ENCODE measurements at regions of chr11 and their contacts with region 1.

Region 1: DNA sequence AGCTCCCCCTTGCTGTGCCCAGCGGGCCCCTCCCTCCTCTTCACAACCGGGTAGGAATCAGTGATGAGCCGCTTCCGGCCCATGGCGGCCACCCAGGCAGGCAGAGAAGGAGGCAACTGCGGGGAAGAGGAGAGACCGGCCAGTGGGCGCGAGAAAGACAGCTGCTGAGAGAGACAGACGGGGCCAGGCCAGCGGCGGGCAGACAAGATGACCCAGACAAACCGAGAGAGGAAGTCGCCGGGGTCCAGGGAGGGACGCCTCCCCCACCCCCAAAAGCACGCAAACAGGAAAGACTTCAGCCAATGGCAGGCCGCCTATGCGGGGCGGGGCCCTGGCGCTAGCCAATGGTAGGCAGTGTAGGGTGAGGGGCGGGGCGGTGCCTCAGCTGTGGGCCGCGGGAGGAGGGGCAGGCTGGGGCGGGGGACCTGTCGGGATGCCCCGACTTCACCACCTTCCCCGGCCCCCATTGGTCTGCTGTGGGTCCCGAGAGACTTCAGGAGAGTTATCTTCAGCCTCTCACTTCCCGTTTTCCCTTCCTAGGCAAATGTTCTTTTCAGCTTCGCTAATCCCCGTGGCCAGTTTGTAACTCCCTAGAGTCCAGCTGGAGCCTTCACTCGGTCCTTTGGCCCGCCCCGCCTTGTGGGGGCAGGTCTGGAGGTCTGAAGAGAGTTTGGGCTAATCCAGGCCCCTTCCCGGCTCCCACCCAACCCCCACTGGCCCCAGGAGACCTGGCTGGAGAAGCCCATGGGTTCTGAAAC is at the start of gene POLD4:
- DNase-seq: peak; percentile 92
- ATAC-seq: peak; percentile 83
- H3K4me3 ChIP-seq: peak within 1 kb of the TSS; percentile 53
- H3K27ac ChIP-seq: peak within 1 kb of the TSS; percentile 91
- H3K4me1 ChIP-seq: peaks cover 42% of the 10 kb centered on the region
- H3K27me3 ChIP-seq: no peaks in the 10 kb centered on the region
- CTCF ChIP-seq: no peak
- POLR2A ChIP-seq: peak; percentile 91
- RAD21 ChIP-seq: no peak
- total RNA-seq, gene POLD4: 40.8 and 46.4 TPM in 2 replicates

Region 2: DNA sequence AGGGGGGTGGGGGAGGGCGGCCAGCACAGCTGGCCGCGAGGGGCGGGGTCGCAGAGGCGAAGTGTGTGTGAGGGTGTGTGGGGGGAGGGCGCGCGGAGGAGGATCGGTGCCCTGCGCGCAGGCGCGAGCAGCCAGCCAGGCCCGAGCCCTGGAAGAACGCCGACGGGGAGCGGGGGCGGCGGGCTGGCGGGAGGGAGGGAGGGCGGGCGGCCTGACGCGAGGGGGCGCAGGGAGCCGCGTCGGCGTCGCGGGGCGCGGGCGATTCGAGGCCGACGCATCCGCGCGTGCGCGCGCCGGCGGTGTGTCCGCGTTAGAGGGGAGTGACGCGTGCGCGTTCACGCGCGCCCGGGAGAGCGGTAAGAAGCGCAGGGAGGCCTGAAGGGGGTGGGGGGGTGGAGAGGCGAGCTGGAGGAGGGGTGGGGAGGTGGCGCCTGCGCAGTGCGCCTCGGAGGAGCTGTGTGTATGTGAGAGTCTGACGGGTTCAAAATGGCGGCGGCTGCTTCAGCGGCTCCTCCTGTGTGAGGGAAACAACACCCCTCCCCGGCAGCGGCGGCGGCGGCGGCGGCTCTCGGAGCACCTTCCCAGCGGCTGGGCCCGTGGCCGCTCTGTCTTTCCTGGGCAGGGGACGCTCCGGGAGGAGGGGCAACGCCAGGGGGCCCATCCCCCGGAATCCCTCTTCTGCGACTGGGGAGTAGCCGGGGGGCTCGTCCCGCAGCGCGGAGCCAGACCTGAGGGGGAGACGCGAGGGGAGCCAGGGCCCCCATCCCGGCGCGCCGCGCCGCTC is 234.5 kb before region 1 on chr11 and contains the start of gene KDM2A:
- CTCF ChIA-PET with region 1: no interaction called
- POLR2A ChIA-PET with region 1: no interaction called
- dilution Hi-C with region 1: no loop called
- in situ Hi-C with region 1: no loop called
- intact Hi-C with region 1: no loop called
- DNase-seq: peak; percentile 99
- ATAC-seq: peak; percentile 92
- H3K4me3 ChIP-seq: peak within 1 kb of the TSS; percentile 99
- H3K27ac ChIP-seq: peak within 1 kb of the TSS; percentile 95
- H3K4me1 ChIP-seq: peaks cover 8% of the 10 kb centered on the region
- H3K27me3 ChIP-seq: no peaks in the 10 kb centered on the region
- CTCF ChIP-seq: peak; percentile 22; the same call in 1 of the 2 replicates
- POLR2A ChIP-seq: peak; percentile 70
- RAD21 ChIP-seq: no peak; the same call in 1 of the 2 replicates
- total RNA-seq, gene KDM2A: 26.7 and 27.8 TPM in 2 replicates

Region 3: GRCh38 chr11:67239783-67240575 is 113.5 kb before region 1 on chr11:
- CTCF ChIA-PET with region 1: no interaction called
- POLR2A ChIA-PET with region 1: no interaction called
- dilution Hi-C with region 1: no loop called
- in situ Hi-C with region 1: no loop called
- intact Hi-C with region 1: no loop called
- DNase-seq: peak; percentile 99
- ATAC-seq: peak; percentile 97
- H3K4me3 ChIP-seq: peak overlapping the region; percentile 67
- H3K27ac ChIP-seq: peak overlapping the region; percentile 90
- H3K4me1 ChIP-seq: peaks cover 13% of the 10 kb centered on the region
- H3K27me3 ChIP-seq: no peaks in the 10 kb centered on the region
- CTCF ChIP-seq: no peak
- POLR2A ChIP-seq: peak; percentile 97
- RAD21 ChIP-seq: no peak

Region 4: DNA sequence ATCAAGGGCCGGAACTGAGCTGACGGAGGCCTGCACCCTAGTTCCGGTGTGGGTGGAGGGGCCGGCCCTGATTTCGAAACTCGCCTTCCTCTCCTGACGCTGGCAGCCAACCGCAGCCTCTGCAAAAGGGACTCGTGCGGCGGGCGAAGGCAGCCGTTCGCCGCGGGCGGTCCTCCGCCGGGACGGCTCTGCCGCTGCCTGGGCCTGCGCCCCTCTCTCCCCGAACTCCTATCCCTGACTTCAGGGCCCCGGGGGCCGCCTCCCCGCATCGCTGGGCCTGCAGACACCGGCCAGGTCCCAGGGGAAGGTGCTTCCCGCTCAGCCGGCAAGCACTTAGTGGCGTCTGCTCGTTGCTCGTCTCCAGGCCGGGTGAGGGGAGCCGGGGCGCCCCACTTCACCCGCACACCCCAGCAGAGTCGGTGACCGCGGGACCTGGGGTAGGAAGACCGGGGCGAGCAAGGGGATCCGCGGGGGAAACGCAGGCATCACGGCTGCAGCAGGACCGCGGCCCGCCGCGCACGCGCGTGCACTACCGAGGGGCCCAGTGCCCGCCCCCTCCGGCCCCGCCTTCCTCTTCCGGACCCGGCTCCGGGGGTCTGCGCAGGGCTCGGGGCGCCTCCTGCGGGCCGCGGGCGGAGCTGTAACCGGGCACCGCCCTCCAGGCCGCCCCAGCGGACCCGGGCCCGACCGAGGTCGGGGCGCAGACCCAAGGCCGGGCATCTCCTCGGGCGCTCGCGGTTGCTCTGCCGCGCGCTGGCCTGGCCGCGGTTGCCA is 64.9 kb before region 1 on chr11:
- CTCF ChIA-PET with region 1: no interaction called
- POLR2A ChIA-PET with region 1: no interaction called
- dilution Hi-C with region 1: no loop called
- in situ Hi-C with region 1: no loop called
- intact Hi-C with region 1: no loop called
- DNase-seq: peak; percentile 88
- ATAC-seq: peak; percentile 80
- H3K4me3 ChIP-seq: peak overlapping the region; percentile 74
- H3K27ac ChIP-seq: peak overlapping the region; percentile 94
- H3K4me1 ChIP-seq: peaks cover 21% of the 10 kb centered on the region
- H3K27me3 ChIP-seq: no peaks in the 10 kb centered on the region
- CTCF ChIP-seq: peak; percentile 56
- POLR2A ChIP-seq: peak; percentile 85
- RAD21 ChIP-seq: peak; percentile 40

Region 5: DNA sequence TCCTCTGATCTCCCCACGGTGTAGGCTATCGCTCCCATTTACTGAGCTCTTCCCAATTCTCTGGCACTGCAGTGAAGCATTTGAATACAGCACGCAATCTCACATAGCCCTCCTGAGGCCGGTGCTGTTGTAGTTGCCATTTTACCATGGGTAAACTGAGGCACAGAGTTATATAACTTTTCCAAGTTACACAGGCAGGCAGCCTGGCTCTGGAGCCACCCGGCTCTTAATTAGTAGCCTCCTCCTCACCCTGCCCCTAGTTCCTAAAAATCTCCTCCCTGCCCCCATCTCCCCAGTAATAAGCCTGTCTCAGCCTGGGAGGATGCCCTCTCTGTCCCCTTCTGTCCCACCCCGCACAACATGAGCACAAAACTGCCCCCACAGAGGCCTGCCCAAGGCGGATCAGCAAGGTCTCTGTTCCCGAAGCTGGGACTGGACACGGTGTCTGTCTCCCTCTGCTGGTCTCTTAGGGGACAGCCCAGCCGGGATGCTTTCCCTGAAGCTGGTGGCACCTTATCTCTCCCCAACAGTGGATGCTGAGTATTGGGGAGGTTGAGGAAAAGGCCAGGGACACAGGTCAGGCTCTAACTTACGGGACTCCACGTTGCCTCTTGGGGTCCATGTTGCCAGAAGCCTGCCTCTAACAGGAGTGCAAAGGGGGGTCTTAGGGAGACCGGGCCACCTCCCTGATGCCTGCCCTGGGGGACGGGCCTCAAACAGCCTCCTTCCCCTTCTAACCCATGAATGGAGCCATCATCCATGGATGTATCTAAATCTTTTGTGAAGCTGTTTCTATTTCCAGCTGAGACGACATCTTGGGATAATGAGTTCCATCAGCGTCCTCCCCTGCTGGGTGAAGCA is 29.0 kb after region 1 on chr11:
- CTCF ChIA-PET with region 1: interaction called, 128 read pairs
- POLR2A ChIA-PET with region 1: interaction called, 21 read pairs
- dilution Hi-C with region 1: no loop called
- in situ Hi-C with region 1: no loop called
- intact Hi-C with region 1: loop called (anchors 1 kb)
- DNase-seq: peak; percentile 69
- ATAC-seq: peak; percentile 88
- H3K4me3 ChIP-seq: no peak overlapping the region
- H3K27ac ChIP-seq: no peak overlapping the region
- H3K4me1 ChIP-seq: peaks cover 20% of the 10 kb centered on the region
- H3K27me3 ChIP-seq: no peaks in the 10 kb centered on the region; the same call in 1 of the 2 replicates
- CTCF ChIP-seq: peak; percentile 97
- POLR2A ChIP-seq: 0 out of 2 replicates have a peak, but pooled peaks have one; percentile 48
- RAD21 ChIP-seq: peak; percentile 99